Gastrocnemius medialis (tissue), 4 donors: ENCODE measurements at regions of chr12 and their contacts with region 1.

Region 1: DNA sequence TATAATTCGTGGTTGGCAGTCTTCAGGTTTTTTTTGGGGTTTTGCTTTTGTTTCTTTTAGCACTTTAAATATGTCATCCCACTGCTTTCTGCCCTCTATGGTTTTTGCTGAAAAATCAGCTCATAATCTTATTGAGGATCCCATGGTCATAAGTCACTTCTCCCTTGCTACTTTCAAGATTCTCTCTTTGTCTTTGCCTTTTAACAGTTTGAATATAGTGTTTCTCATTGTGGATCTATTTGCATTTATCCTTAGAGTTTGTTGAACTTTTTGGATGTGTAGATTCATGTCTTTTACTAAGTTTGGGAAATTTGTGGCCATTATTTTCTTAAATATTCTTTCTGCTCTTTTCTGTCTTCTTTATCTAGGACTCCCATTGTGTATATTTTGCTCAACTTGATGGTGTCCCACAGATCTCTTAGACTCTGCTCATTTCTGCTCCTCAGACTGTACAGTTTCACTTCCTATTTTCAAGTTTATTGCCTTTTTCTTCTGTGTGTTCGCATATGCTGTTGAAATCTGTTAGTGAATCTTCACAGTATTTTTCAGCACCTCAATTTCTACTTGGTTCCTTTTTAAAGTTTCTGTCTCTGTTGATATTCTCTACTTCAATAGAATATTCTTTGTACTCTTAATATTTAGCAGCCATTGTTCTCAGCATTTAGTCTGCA is 70.8 kb downstream of the WNK1 start:
- DNase-seq: no peak
- ATAC-seq: no peak
- H3K4me3 ChIP-seq: no peak overlapping the region
- H3K27ac ChIP-seq: peak overlapping the region in 1 of 4 donors; percentile 3
- H3K4me1 ChIP-seq: peaks cover 10 to 44% of the 10 kb centered on the region in 2 donors
- H3K27me3 ChIP-seq: no peaks in the 10 kb centered on the region
- CTCF ChIP-seq: no peak
- POLR2A ChIP-seq: no peak

Region 2: DNA sequence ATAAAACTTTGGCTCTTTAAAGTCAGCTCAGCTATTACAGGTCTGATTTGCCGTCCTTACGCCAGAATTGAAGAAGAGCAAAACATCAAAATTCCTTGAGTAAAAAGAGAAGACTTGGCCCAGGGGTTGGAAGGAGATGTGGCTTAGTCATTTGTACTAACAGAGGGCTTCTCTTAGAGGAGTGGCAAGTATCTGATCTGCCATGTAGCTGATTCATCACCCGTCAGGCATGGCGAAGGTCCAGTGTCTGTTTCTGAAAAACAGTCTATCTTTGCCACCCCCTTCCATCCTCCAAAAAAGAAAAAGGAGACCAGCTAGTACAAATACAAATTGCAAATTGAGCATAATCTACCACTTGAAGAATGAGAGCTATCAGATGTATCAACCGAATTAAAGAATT is 34.4 kb after region 1 on chr12:
- in situ Hi-C with region 1: no loop called
- intact Hi-C with region 1: loop called (anchors 5 kb)
- DNase-seq: peak; percentile 73 to 80
- ATAC-seq: peak; percentile 98
- H3K4me3 ChIP-seq: peak overlapping the region in 1 of 4 donors; percentile 0
- H3K27ac ChIP-seq: peak overlapping the region; percentile 72 to 84 (median 78)
- H3K4me1 ChIP-seq: peaks cover 24 to 42% of the 10 kb centered on the region in 2 donors
- H3K27me3 ChIP-seq: no peaks in the 10 kb centered on the region
- CTCF ChIP-seq: no peak
- POLR2A ChIP-seq: no peak